Mammary epithelial cell (primary cell): ENCODE measurements at regions of chr7 and their contacts with region 1.

Region 1: DNA sequence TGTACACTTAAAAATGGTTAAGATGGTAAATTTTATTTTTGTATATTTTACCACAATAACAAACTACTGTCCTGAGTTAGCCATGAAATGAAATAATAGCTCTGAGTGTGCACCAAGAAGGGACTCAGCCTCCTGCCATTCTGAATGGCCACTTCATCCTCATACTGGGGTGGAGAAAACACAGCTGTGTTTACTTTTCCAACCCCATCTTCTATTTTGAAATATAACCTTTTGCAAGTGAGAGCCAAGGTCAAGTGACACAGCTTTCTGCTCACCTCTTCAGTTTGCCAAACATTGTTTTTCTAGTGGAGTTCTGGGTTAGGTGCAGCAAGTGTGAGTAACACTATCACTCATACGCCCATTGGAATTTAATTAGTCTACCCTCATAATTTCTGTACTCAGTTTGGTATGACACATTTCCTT is 107.4 kb upstream of the GLCCI1 start:
- DNase-seq: peak; percentile 95
- H3K4me3 ChIP-seq: no peak overlapping the region
- H3K27ac ChIP-seq: peak overlapping the region; percentile 73
- H3K4me1 ChIP-seq: peaks cover 11% of the 10 kb centered on the region
- H3K27me3 ChIP-seq: no peaks in the 10 kb centered on the region
- CTCF ChIP-seq: no peak

Region 2: DNA sequence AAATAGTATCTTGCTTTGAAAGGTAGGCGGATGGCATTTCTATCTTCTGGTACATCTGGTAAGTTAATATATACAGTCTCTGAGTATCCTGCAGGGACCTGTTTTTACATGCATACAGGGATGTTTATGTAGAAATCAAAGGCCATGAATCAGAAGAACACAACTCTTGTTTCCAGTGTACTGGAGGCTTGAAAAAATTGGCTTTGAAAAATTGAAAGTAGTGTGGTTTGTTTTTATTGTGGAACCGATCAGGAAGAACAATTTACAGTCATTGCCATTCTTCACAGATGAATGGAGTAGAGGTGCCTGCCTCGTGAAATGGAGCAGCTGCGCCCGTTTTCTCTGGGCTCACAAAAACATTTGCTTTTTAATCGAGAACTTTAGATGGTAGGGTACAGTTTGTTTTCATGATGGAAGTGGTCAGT is 88.8 kb before region 1 on chr7:
- CTCF ChIA-PET with region 1: no interaction called
- dilution Hi-C with region 1: no loop called
- in situ Hi-C with region 1: no loop called
- intact Hi-C with region 1: loop called (anchors 2 kb)
- DNase-seq: peak; percentile 96
- H3K4me3 ChIP-seq: peak overlapping the region; percentile 41 to 59 (median 53)
- H3K27ac ChIP-seq: peak overlapping the region; percentile 84
- H3K4me1 ChIP-seq: peaks cover 19% of the 10 kb centered on the region
- H3K27me3 ChIP-seq: no peaks in the 10 kb centered on the region
- CTCF ChIP-seq: no peak

Region 3: DNA sequence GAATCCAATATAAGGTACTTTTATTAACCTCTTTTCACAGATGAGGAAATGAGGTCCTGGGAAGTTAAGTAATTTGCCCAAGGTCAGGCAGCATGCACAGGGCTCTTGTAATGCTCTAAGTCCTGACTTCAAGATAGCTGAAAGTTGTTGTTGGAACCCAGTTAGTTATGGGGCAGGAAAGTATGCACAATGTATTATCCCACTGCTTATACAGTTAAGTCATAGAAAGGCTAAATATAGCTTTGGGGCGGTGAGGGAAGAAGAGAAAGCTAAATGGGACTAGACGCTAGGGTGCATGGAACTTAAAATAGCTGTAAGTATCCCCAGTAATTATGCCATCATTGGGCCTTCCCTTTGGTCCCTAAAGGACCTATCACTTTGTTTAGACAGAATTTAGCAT is 116.6 kb after region 1 on chr7:
- CTCF ChIA-PET with region 1: no interaction called
- dilution Hi-C with region 1: no loop called
- in situ Hi-C with region 1: no loop called
- intact Hi-C with region 1: no loop called
- DNase-seq: no peak
- H3K4me3 ChIP-seq: no peak overlapping the region
- H3K27ac ChIP-seq: no peak overlapping the region
- H3K4me1 ChIP-seq: no peaks in the 10 kb centered on the region
- H3K27me3 ChIP-seq: no peaks in the 10 kb centered on the region
- CTCF ChIP-seq: no peak